Activated T-helper 2 cell treated with anti-CD3 and anti-CD28 coated beads, Interferon-gamma antibody, Interleukin-2, Interleukin-4, amounts not matched to agents 10 μg/mL and 5 μg/mL and 100 μg/mL, durations not matched to agents 14 hours and 24 hours and 36 hours (primary cell): ENCODE measurements at regions of chr6 and their contacts with region 1.

Region 1: DNA sequence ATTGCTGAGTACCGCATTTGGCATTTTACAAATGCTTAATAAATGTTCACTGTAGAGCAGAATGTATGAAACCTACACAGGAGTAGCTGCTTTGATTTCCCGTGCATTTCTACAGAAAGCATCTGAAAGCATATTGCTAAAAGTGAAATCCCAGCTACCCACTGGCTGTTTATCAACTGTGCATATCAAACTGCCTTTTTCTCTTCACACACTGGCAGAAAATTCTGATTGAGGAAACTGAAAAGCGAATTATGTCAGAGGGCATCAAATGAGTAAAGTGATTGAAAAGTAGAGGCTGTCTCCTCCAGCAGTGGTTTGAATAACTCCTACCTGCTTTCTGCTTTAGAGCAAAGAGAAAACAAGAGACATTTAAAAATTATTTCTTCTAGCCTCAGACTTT is 28.0 kb downstream of the STX11 start:
- DNase-seq: no peak
- H3K4me3 Mint-ChIP-seq: no peak overlapping the region
- H3K27ac Mint-ChIP-seq: no peak overlapping the region
- H3K4me1 Mint-ChIP-seq: peaks cover 64% of the 10 kb centered on the region
- H3K27me3 Mint-ChIP-seq: no peaks in the 10 kb centered on the region

Region 2: DNA sequence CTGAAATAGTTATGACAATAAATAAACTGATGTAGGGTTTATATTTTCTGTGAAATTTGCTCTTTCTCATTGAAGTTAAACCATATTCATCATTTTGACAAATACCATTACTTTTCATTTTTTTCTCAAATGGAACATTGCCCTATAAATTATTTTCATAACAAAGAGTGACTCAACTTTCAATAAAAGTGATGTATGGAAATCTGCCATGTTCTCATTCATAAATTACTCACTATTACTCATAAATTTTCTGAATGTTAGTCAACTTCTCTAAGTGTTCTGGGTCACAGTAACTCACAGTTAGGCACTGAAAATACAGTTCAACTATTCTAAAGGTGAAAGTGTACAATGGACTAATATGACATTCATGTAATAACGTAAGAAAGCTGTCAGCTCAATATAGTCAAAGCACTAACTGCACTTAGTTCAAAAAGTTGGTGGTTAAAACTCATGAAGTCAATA is 47.0 kb before region 1 on chr6:
- intact Hi-C with region 1: loop called (anchors 1 kb)
- DNase-seq: no peak
- H3K4me3 Mint-ChIP-seq: peak overlapping the region; percentile 19
- H3K27ac Mint-ChIP-seq: peak overlapping the region; percentile 84
- H3K4me1 Mint-ChIP-seq: peaks cover 29% of the 10 kb centered on the region
- H3K27me3 Mint-ChIP-seq: peaks cover 4% of the 10 kb centered on the region

Region 3: DNA sequence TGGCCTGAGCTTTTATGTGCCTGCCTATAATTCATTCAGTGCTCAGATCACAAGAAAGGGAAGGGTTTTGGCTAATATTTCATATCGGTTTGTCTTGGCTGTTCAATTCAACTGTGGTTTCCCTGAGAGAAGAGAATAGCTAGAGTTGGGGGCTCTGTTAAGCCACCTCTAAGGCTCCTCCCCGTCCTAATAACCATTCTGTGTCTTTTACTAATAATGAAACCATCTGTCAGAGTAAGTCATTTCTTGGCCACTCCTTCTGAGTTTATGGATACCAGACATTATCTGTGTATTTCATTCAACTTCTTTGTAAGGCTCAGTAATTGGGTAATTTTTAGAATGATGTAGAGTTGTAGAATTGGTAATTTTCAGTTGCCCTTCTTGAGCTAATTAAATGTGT is 22.8 kb before region 1 on chr6:
- intact Hi-C with region 1: loop called (anchors 1 kb)
- DNase-seq: no peak
- H3K4me3 Mint-ChIP-seq: no peak overlapping the region
- H3K27ac Mint-ChIP-seq: peak overlapping the region; percentile 26
- H3K4me1 Mint-ChIP-seq: peaks cover 61% of the 10 kb centered on the region
- H3K27me3 Mint-ChIP-seq: no peaks in the 10 kb centered on the region

Region 4: GRCh38 chr6:144234935-144235334 is 56.6 kb after region 1 on chr6:
- intact Hi-C with region 1: no loop called
- DNase-seq: no peak
- H3K4me3 Mint-ChIP-seq: no peak overlapping the region
- H3K27ac Mint-ChIP-seq: no peak overlapping the region
- H3K4me1 Mint-ChIP-seq: no peaks in the 10 kb centered on the region
- H3K27me3 Mint-ChIP-seq: peaks cover 3% of the 10 kb centered on the region

Region 5: GRCh38 chr6:144265390-144265789 is 87.1 kb after region 1 on chr6:
- intact Hi-C with region 1: no loop called
- DNase-seq: no peak
- H3K4me3 Mint-ChIP-seq: no peak overlapping the region
- H3K27ac Mint-ChIP-seq: no peak overlapping the region
- H3K4me1 Mint-ChIP-seq: no peaks in the 10 kb centered on the region
- H3K27me3 Mint-ChIP-seq: peaks cover 6% of the 10 kb centered on the region